Activated T-helper 1 cell treated with anti-CD3 and anti-CD28 coated beads, Interleukin-12 subunit alpha, Interleukin-12 subunit beta, Interleukin-2, Interleukin-4 antibody, amounts not matched to agents 30 ng/mL and 10 ng/mL and 1 ng/mL, durations not matched to agents 14 hours and 24 hours and 36 hours (primary cell): ENCODE measurements at regions of chr7 and their contacts with region 1.

Region 1: DNA sequence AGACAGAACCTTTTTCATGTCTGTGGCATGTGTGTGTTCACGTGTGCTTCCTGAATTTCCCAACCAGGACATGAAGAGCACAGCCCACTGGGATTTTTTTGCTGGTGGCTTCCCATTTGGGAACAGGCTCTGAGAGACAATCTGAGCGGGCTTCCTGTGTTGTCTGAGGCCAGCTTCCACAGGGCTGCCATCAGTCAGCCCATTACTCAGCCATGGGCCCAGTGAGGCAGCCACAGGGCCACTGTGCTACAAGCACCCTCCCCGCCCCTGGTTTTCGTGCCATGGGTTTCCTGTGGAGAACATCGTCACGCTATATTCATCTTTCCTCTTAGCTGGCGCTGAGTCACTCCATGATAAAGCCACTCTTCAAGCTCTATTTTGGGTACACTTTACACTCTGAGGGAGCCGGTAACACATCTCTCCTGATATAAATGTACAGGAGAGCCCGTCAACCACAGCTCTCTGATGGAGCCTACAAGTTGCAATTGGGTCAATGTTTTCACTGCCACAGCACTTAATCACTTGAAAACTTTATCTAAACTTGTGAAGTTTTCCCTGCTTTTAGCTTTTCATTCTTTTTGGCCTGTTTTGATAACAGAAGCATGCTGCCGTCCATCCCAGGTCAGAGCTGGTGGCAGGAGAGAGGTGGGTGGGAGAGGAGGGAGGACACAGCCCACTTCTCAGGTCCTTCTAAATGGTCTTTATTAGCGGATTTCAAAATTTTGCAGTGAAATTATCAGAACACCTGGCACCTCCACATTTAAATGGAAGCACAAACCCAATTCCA is 96.9 kb downstream of the HIPK2 start:
- DNase-seq: peak; percentile 65
- H3K4me3 Mint-ChIP-seq: peak overlapping the region; percentile 74
- H3K27ac Mint-ChIP-seq: peak overlapping the region; percentile 85
- H3K4me1 Mint-ChIP-seq: peaks cover 61% of the 10 kb centered on the region
- H3K27me3 Mint-ChIP-seq: no peaks in the 10 kb centered on the region

Region 2: GRCh38 chr7:139635526-139636302 is 45.2 kb before region 1 on chr7:
- intact Hi-C with region 1: loop called (anchors 1 kb)
- DNase-seq: peak; percentile 63
- H3K4me3 Mint-ChIP-seq: peak overlapping the region; percentile 79
- H3K27ac Mint-ChIP-seq: peak overlapping the region; percentile 94
- H3K4me1 Mint-ChIP-seq: peaks cover 48% of the 10 kb centered on the region
- H3K27me3 Mint-ChIP-seq: no peaks in the 10 kb centered on the region

Region 3: DNA sequence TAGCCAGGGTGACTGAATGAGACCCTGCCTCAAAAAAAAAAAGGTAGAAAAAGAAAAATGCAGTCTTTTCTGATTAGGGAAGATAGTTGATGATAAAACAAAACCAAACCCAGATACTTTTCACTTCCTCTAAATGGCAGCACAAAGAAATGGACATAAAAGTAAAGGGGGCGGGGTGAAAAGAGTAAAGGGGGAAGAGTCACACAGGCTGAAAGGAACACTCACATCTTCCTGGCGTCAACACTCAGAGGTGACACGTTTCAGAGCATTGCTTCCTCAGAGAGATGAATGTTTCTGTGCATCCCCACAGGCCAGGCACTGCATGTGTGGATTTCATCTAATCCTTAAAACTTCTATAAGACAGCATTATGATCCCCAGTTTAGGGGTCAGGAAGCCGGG is 15.7 kb after region 1 on chr7:
- intact Hi-C with region 1: loop called (anchors 1 kb)
- DNase-seq: no peak
- H3K4me3 Mint-ChIP-seq: no peak overlapping the region
- H3K27ac Mint-ChIP-seq: no peak overlapping the region
- H3K4me1 Mint-ChIP-seq: peaks cover 37% of the 10 kb centered on the region
- H3K27me3 Mint-ChIP-seq: no peaks in the 10 kb centered on the region

Region 4: GRCh38 chr7:139915864-139916716 is 235.2 kb after region 1 on chr7:
- intact Hi-C with region 1: loop called (anchors 2 kb)
- DNase-seq: peak; percentile 65
- H3K4me3 Mint-ChIP-seq: no peak overlapping the region
- H3K27ac Mint-ChIP-seq: peak overlapping the region; percentile 74
- H3K4me1 Mint-ChIP-seq: peaks cover 29% of the 10 kb centered on the region
- H3K27me3 Mint-ChIP-seq: peaks cover 2% of the 10 kb centered on the region

Region 5: DNA sequence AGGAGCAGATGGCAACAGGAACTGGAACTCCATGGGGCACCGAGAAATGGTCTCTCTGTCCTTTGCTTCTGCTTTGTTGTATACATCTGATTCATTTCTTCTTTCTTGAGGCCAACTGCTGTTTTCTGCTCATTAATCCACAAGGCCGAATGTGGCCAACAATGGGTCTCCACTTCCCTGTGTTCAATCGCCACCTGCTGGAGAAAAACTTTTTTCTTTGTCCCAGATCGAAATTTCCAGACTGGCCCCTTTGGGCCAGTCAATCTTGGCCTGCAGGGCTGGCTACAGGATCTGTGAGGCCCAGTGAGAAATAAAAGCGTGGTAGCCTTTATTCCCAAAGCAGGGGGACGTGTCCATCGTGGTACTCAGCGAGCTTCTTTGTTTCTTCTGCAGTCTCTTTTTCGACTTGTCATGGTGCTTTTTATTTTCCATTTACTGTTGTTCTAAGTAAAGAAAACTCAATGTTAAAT is 323.1 kb after region 1 on chr7:
- intact Hi-C with region 1: no loop called
- DNase-seq: peak; percentile 6
- H3K4me3 Mint-ChIP-seq: no peak overlapping the region
- H3K27ac Mint-ChIP-seq: no peak overlapping the region
- H3K4me1 Mint-ChIP-seq: no peaks in the 10 kb centered on the region
- H3K27me3 Mint-ChIP-seq: peaks cover 2% of the 10 kb centered on the region

Region 6: DNA sequence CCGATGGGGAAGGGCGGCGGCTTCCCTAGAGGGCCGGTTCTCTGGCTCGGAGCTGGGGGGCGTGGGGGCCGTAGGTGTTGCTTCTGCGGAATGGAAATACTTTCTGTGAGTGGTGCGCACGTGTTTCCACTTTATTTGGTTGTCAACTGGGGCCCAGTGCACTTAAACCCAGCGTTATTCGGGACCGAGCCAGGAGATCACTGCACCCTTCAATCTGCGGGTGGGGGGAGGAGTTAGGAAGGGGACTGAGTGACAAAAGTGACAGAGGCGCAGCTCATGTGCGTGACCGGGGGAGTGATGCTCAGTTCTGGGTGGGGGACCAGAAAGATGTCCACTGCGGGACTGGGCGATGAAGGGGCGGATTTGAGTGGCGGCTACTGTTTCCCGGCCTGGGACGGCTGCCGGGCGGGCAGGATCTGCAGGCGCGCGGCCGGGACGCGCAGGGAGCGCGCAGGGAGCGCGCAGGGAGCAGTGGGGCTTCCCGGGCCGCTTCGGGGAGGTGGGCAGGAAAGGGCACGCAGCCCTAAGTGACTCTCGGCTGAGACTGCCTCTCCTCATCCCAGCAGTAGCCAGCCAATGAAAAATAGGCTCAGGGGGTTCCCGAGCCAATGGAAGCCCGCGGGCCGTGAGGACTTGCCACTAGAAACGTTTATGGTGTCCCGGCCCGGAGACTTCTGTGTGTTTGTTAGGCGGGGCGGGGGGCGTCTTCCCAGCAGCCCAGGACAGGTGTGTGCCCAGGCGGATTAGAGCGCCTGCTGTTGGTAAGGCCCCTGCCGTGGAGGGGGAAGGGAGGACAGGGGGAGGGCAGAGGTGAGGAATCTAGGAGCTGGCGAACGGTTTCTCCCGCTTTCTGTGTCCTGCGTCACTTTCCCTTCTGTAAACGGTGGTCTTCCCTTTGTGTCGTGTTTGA is 550.2 kb after region 1 on chr7:
- intact Hi-C with region 1: loop called (anchors 10 kb)
- DNase-seq: peak; percentile 45
- H3K4me3 Mint-ChIP-seq: peak overlapping the region; percentile 91
- H3K27ac Mint-ChIP-seq: peak overlapping the region; percentile 94
- H3K4me1 Mint-ChIP-seq: peaks cover 46% of the 10 kb centered on the region
- H3K27me3 Mint-ChIP-seq: no peaks in the 10 kb centered on the region